Calu3 (cell line): ENCODE measurements at regions of chr9 and their contacts with region 1.

Region 1: GRCh38 chr9:81394881-81395675 is 294.3 kb downstream of the TLE1 start:
- DNase-seq: no peak
- H3K4me3 Mint-ChIP-seq: no peak overlapping the region
- H3K27ac Mint-ChIP-seq: no peak overlapping the region
- H3K4me1 Mint-ChIP-seq: peaks cover 14% of the 10 kb centered on the region
- H3K27me3 Mint-ChIP-seq: no peaks in the 10 kb centered on the region
- CTCF ChIP-seq: no peak

Region 2: DNA sequence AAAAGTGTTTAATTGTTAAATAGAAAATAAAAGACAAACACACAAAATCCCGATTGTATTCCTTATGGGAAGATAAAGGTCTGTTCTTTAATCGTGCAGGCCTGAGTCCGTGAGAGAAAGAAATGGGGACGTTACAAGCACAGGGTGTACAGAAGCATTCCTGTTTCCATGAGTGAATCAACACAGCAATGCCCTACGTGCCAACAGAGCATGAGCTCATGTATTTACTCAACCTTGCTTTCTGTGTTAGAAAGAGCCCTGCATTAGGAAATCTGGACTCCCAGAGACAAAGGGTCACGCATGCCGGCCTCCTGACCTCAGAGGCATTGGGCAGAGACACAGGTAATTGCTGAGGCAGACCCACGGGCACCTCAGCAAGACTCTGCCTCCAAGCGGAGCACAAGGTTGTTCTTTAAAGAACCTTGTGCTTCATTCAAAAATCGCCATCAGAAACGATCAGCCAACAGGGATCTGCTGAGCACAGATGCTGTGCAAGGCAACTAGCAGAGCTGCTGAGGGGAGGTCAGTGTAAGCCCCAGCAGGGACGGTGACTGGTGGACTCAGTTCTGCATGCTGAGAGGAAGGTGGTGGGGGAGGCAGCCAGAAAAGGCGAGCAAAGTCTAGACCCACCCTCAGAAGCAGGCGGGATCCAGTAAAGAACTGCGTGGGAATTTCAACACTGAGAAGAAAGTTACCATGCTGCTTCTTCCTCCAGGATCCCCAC is 193.2 kb after region 1 on chr9:
- CTCF ChIA-PET with region 1: no interaction called
- intact Hi-C with region 1: loop called (anchors 10 kb)
- DNase-seq: peak; percentile 50
- H3K4me3 Mint-ChIP-seq: peak overlapping the region; percentile 42
- H3K27ac Mint-ChIP-seq: peak overlapping the region; percentile 52
- H3K4me1 Mint-ChIP-seq: peaks cover 30% of the 10 kb centered on the region
- H3K27me3 Mint-ChIP-seq: no peaks in the 10 kb centered on the region
- CTCF ChIP-seq: no peak